ENCODE measurements at regions of chr15 and their contacts with region 1.

Region 1: DNA sequence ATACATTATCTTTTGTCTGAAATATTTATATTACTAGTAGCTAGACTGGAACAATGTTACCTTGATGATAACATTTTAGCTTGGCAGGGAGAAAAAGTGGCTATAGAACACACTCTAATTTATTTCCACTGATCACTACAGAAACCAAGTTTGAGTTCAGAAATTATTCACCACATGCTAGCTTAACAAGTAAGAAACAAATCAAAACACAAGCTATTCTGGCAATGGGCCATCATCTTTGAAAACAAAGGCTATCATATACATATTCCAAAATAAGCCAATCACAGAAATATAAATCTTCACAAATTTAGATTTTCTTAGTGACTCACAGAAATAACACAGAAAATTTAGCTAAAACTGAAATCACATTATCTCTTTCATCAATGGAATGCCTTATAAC is 17.1 kb downstream of the AQR start:
- DNase-seq: no peak
- H3K4me3 Mint-ChIP-seq: no peak overlapping the region
- H3K27ac Mint-ChIP-seq: no peak overlapping the region
- H3K4me1 Mint-ChIP-seq: no peaks in the 10 kb centered on the region
- H3K27me3 Mint-ChIP-seq: no peaks in the 10 kb centered on the region
- CTCF ChIP-seq: no peak

Region 2: DNA sequence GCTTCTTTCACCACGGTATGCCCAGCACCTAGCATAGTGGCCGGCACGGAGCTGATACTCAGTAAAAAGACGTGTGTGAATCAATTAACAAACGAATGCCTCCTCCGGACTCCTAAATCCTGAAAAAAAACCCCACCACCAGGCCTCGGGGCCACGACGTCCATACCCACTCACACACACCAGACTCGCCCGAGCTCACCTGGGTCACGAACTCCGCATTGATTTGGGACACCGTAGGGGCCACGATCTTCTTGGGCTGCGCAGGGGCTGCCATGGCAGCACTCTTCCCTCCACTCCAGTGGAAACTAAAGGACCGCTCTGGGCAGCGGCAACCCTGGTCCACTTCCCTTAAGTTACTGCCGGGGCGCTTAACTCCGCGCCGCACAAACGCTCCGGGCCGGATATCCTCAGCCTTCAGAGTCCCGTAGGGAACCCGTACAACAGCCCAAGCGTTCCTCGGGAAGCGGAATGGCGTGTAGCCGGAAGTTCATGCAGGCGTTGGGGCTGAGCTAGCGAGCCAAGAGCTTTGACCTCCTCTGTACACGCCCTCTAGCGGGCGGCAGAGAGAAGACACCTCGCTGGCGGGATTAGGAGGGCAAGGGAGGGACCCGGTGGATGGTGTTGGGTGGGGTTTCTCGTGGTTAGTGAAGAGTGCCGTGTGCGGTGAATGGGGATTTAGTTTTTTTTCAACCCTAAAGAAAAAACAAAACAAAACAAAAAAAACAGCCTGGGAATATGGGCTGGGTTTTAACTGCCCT is 17.0 kb after region 1 on chr15 and contains the start of gene AQR:
- CTCF ChIA-PET with region 1: interaction called, 3 read pairs
- POLR2A ChIA-PET with region 1: interaction called, 10 read pairs
- intact Hi-C with region 1: no loop called
- DNase-seq: peak; percentile 97
- H3K4me3 Mint-ChIP-seq: peak within 1 kb of the TSS; percentile 99
- H3K27ac Mint-ChIP-seq: peak within 1 kb of the TSS; percentile 99
- H3K4me1 Mint-ChIP-seq: peaks cover 19% of the 10 kb centered on the region
- H3K27me3 Mint-ChIP-seq: no peaks in the 10 kb centered on the region
- CTCF ChIP-seq: no peak
- total RNA-seq, gene AQR: 26.5 and 33.1 TPM in 2 replicates

Measured in MCF 10A (cell line).